Left cardiac atrium (tissue), 4 donors: ENCODE measurements at regions of chr11 and their contacts with region 1.

Region 1: GRCh38 chr11:119373921-119374631 is 7.4 kb downstream of the USP2 start:
- DNase-seq: peak; percentile 59
- ATAC-seq: peak in 1 of 2 donors; percentile 11

Region 2: DNA sequence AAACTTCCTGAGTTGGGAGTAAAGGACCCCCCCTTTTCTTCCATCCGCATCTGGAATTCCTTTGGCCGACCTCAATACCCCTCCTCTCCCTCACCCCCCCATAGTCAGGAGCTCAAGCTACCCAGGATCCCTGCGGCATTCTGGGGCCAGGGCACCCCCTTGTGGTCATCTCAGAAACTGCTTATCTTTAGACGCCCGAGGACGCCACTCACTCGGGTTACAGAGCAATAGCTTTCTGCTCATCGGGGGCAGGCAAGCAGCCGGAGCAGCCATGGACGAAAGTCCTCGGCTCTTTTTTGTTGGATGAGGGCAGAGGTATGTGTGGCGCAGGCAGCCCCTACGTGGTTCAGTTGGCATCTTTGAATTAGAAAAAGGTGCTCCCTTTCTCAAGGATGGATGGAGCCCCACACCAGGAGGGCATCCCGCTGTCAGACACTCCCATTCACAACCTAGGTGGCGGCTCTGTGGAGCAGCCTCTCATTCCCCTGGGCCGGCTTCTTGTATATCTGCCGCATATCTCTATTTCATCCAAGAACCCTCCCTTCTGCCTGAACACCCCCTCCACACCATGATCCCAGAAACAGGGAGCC is 35.7 kb before region 1 on chr11:
- intact Hi-C with region 1: loop called in 1 of 2 experiments (anchors 5 kb)
- DNase-seq: peak; percentile 74
- ATAC-seq: peak; percentile 8